GM18951 (cell line): ENCODE measurements at regions of chr2 and their contacts with region 1.

Region 1: GRCh38 chr2:208407667-208408066 is 1.1 kb downstream of the PTH2R start:
- POLR2A ChIP-seq: no peak

Region 2: DNA sequence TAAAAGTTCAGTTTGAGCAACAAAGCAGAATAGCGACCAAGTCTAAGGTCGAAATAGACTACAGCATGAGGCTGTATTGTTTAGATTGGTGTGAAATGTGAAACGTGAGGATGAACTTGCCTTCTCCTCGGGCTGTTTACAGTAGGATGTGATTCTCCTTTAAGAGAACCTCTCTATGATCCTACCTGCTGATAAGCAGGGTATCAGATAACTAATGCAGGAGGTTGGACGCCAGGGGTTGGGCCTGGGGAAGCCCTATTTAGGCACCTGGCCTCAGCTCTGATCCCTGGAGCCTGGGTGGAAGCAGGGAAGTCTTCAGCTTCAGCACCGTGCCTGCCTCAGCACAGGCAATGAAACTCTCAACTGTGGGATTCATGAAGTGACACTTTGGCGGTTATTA is 294.7 kb before region 1 on chr2:
- in situ Hi-C with region 1: no loop called
- POLR2A ChIP-seq: no peak

Region 3: GRCh38 chr2:209208211-209208610 is 800.5 kb after region 1 on chr2:
- in situ Hi-C with region 1: loop called (anchors 25 kb)
- POLR2A ChIP-seq: no peak